Ovary (tissue), 10 donors: ENCODE measurements at regions of chr18 and their contacts with region 1.

Region 1: GRCh38 chr18:10453806-10454673 is at the start of gene APCDD1:
- DNase-seq: peak; percentile 88 to 93 (median 92)
- H3K4me3 ChIP-seq: peak within 1 kb of the TSS; percentile 71
- H3K27ac ChIP-seq: peak within 1 kb of the TSS; percentile 42 to 96
- H3K4me1 ChIP-seq: peaks cover 9% of the 10 kb centered on the region
- H3K27me3 ChIP-seq: no peaks in the 10 kb centered on the region
- CTCF ChIP-seq: peak in 1 of 3 donors; percentile 22
- EP300 ChIP-seq: no peak
- POLR2A ChIP-seq: peak; percentile 54
- total RNA-seq, gene APCDD1: 21.1 to 112 (median 60.6) TPM

Region 2: DNA sequence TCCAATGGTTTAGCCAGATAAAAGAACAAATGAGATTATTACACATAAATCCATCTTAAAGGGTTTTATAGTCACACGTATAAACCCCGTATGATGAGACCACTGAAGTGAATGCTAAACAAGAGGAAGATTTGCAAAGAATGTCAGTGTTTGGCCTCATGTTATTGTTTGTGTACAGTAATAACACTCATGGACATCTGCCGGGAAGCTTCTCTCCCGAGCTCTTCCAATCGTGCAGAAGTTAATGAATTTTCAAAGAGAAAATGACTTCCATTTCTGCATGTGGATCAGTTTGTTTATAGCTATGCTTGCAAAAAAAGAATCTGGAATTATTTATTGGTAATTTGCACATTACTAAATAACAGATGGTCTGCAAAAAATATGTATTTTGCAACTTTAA is 88.1 kb before region 1 on chr18:
- intact Hi-C with region 1: no loop called
- DNase-seq: no peak
- H3K4me3 ChIP-seq: no peak overlapping the region
- H3K27ac ChIP-seq: no peak overlapping the region
- H3K4me1 ChIP-seq: no peaks in the 10 kb centered on the region
- H3K27me3 ChIP-seq: no peaks in the 10 kb centered on the region
- CTCF ChIP-seq: no peak
- EP300 ChIP-seq: no peak
- POLR2A ChIP-seq: no peak

Region 3: GRCh38 chr18:10410472-10411308 is 43.4 kb before region 1 on chr18:
- intact Hi-C with region 1: loop called in 1 of 4 experiments (anchors 1 kb)
- DNase-seq: no peak
- H3K4me3 ChIP-seq: no peak overlapping the region
- H3K27ac ChIP-seq: no peak overlapping the region
- H3K4me1 ChIP-seq: peaks cover 5% of the 10 kb centered on the region
- H3K27me3 ChIP-seq: no peaks in the 10 kb centered on the region
- CTCF ChIP-seq: no peak
- EP300 ChIP-seq: no peak
- POLR2A ChIP-seq: no peak

Region 4: DNA sequence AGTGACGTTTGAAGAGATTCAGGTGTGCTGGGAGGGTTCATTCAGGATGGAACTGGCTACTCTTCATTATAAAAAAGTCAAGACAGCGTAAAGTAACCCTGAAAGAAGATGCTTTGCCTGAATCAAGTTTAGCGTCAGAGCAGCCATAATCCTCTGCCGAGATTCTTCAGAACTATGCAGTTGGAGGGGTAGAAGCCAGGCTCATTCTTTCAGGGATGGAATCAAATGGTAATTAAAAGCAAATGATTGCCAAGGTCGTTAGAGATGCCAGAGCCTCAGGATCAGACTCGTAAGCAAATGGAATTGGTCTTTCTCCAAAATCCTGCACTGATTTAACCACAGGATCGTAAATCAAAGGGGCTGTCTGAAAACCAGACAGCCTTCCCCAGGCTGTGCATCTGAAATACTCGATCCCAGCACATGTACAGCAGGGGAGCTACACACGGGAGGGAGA is 22.3 kb after region 1 on chr18:
- intact Hi-C with region 1: no loop called
- DNase-seq: peak in 3 of 5 donors; percentile 15 to 50 (median 36)
- H3K4me3 ChIP-seq: no peak overlapping the region
- H3K27ac ChIP-seq: peak overlapping the region; percentile 27 to 72
- H3K4me1 ChIP-seq: peaks cover 10% of the 10 kb centered on the region
- H3K27me3 ChIP-seq: no peaks in the 10 kb centered on the region
- CTCF ChIP-seq: no peak
- EP300 ChIP-seq: no peak
- POLR2A ChIP-seq: no peak

Region 5: DNA sequence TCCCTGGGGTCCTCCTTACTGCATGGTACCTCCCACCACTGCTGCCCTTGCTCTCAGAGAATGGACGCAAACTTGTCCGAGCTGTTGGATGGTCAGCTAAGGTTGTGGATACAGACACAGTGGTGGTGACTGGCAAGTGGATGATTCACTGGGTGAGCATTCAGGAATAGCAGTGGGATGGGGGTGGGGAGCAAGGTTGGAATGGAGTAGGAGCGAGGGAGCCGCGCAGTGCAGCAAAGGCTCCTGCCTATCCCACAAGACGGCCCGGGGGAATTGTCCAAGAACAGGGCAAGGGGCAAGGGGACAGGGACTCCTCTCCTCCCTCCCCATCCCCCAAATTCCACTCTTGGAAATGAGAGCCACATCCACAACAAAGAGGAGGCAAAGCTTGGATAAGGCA is 593.1 kb after region 1 on chr18:
- intact Hi-C with region 1: loop called in 1 of 4 experiments (anchors 5 kb)
- DNase-seq: no peak
- H3K4me3 ChIP-seq: no peak overlapping the region
- H3K27ac ChIP-seq: no peak overlapping the region
- H3K4me1 ChIP-seq: no peaks in the 10 kb centered on the region
- H3K27me3 ChIP-seq: no peaks in the 10 kb centered on the region
- CTCF ChIP-seq: no peak
- EP300 ChIP-seq: no peak
- POLR2A ChIP-seq: no peak